Lower lobe of right lung (tissue), 2 donors: ENCODE measurements at regions of chr5 and their contacts with region 1.

Region 1: GRCh38 chr5:126780165-126780827 is 3.4 kb downstream of the LMNB1 start:
- DNase-seq: no peak
- ATAC-seq: no peak
- H3K4me3 ChIP-seq: no peak overlapping the region
- H3K27ac ChIP-seq: no peak overlapping the region
- H3K4me1 ChIP-seq: peaks cover 17% of the 10 kb centered on the region
- H3K27me3 ChIP-seq: no peaks in the 10 kb centered on the region
- CTCF ChIP-seq: peak; percentile 60

Region 2: DNA sequence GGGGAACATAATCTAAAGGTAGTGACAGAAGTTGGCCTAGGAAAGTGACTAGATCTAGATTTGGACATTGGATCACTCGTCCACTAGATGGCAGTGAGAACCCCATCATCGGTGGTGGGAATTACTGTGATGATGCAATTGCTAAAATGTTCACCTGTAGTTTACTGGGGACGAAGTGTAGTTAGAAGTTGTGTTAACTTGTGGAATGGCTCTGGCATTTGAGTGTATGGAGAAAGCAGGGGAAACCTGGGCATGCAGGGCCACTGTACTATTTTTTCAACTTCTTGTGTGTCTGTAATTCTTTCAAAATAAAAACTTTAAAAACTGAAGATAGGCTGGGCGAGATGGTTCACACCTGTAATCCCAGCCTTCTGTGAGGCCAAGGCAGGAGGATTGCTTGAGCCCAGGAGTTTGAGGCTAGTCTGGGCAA is 104.1 kb before region 1 on chr5:
- intact Hi-C with region 1: loop called (anchors 10 kb)
- DNase-seq: no peak
- ATAC-seq: peak; percentile 84 to 89
- H3K4me3 ChIP-seq: no peak overlapping the region
- H3K27ac ChIP-seq: no peak overlapping the region
- H3K4me1 ChIP-seq: no peaks in the 10 kb centered on the region
- H3K27me3 ChIP-seq: no peaks in the 10 kb centered on the region
- CTCF ChIP-seq: peak; percentile 80

Region 3: DNA sequence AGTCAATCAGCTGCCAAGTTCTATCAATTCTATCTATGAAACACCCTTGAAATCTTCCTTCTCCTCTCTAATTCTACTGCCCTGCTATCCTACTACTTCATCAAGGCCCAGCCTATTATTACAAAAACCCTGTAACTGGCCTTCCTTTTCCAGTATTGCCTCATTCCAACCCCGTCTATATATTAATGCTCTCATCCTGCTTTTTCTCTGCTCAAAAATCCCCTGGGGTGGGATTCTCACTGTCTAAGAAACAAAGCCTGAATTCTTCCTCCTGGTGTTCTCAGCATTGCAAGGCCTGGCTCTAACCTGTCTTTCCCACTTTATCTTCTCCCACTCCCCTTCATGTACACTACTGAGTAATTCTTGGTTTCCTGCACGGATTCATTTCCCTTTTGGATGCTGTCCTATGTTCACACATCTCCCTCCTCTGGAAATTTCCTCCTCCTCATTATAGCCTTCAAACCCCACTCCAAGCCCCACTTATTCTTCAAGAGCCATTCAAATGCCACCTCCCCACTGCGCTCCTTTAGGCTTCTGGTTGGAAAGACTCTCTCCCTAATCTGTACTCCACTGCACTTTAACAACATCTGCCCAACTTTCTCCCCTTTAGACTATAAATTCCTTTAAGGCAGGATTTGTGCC is 321.1 kb after region 1 on chr5:
- intact Hi-C with region 1: no loop called
- DNase-seq: no peak
- ATAC-seq: peak; percentile 84 to 95
- H3K4me3 ChIP-seq: no peak overlapping the region
- H3K27ac ChIP-seq: no peak overlapping the region
- H3K4me1 ChIP-seq: no peaks in the 10 kb centered on the region
- H3K27me3 ChIP-seq: no peaks in the 10 kb centered on the region
- CTCF ChIP-seq: no peak